ENCODE measurements at regions of chr20 and their contacts with region 1.

Region 1: DNA sequence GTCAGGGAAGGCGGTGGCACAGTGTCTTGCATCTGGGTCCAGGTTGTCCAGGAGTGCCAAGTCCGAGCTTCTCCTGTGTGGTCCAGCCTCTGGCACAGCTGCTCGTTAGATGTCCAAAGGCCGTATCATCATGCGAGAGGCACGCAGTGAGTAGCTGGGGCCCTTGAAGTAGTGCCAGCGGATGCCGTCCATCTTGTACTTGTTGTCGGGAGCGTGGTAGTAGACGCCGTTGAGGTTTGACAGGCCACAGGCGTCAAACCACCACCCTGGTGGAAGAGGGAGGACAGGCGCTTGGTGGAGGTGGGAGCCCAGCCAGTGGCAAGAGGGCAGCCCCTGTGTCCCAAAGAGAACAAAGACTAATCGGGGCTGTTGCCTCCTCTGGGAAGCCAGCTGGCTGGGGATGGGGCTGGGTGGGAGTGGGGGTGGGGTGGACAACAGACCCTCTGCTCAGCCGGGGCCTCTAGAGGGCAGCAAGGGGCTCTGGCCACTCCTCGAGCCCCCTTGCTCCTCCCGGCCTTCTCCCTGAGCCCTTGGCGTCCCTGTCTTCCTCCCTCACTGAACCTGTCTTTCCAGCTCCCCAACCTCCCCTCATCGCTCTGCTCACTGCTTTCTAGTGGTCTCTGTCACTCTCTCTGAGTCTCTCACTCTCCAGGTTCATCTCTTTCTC is 39.5 kb downstream of the FAM110A start:
- DNase-seq: no peak
- ATAC-seq: peak in 1 of 8 donors; percentile 4
- H3K4me3 ChIP-seq: no peak overlapping the region
- H3K27ac ChIP-seq: no peak overlapping the region
- H3K4me1 ChIP-seq: no peaks in the 10 kb centered on the region
- H3K27me3 ChIP-seq: peaks cover 0 to 15% (median 6%) of the 10 kb centered on the region in 7 donors
- CTCF ChIP-seq: no peak

Region 2: DNA sequence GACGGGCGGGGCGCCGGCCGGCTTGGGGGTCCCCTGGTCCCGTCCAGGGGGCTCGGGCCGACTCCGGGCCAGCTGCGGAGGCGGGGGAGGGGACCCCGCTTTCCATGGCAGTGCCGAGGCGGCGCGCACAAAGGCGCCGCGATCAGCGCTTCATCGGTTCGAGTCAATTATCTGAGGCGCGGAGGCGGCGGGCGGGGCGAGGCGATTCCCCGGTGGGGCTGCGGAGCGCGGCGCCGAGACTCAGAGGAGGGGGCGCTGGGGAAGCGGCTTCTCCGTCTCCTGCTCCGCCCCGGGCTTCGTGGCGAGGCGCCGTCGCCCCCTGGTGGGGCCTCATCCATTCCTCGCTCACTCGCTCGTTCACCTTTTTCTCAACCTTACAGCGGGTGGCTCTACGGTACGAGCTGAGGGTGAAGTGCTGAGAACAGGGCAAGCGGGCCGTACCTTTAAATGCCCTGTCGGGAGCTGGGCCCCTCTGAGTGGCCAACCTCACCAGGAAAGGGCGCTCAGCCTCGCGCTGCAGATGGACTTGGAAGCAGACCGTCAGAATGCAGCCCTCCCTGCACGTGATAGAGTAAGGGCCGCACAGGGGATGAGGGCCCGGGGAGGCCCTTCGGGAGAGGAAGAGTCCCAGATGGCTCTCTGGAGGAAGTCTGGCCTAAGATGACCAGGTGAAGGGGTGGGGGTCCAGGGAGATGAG is 144.6 kb before region 1 on chr20:
- intact Hi-C with region 1: no loop called
- DNase-seq: peak; percentile 50 to 66
- ATAC-seq: peak; percentile 75 to 88 (median 84)
- H3K4me3 ChIP-seq: peak overlapping the region; percentile 38 to 70 (median 58)
- H3K27ac ChIP-seq: peak overlapping the region in 1 of 10 donors; percentile 36
- H3K4me1 ChIP-seq: peaks cover 0 to 16% (median 8%) of the 10 kb centered on the region in 9 donors
- H3K27me3 ChIP-seq: peaks cover 0 to 63% (median 35%) of the 10 kb centered on the region in 7 donors
- CTCF ChIP-seq: peak; percentile 43 to 78 (median 71)

Region 3: GRCh38 chr20:740141-740540 is 132.8 kb before region 1 on chr20:
- intact Hi-C with region 1: no loop called
- DNase-seq: no peak
- ATAC-seq: no peak
- H3K4me3 ChIP-seq: no peak overlapping the region
- H3K27ac ChIP-seq: no peak overlapping the region
- H3K4me1 ChIP-seq: peaks cover 0 to 3% (median 0%) of the 10 kb centered on the region in 9 donors
- H3K27me3 ChIP-seq: peaks cover 0 to 7% (median 0%) of the 10 kb centered on the region in 7 donors
- CTCF ChIP-seq: no peak

Region 4: GRCh38 chr20:768426-768978 is 104.5 kb before region 1 on chr20 and contains the start of gene SLC52A3:
- intact Hi-C with region 1: no loop called
- DNase-seq: peak; percentile 30 to 76
- ATAC-seq: peak; percentile 75 to 93 (median 91)
- H3K4me3 ChIP-seq: peak within 1 kb of the TSS in 9 of 10 donors; percentile 16 to 54 (median 44)
- H3K27ac ChIP-seq: peak within 1 kb of the TSS; percentile 27 to 88 (median 69)
- H3K4me1 ChIP-seq: peaks cover 0 to 17% (median 7%) of the 10 kb centered on the region in 9 donors
- H3K27me3 ChIP-seq: peaks cover 0 to 8% (median 0%) of the 10 kb centered on the region in 7 donors
- CTCF ChIP-seq: peak in 8 of 9 donors; percentile 13 to 62 (median 42)
- total RNA-seq, gene SLC52A3: 1.5 to 5.7 (median 2.6) TPM

Region 5: GRCh38 chr20:916125-916799 is 43.3 kb after region 1 on chr20 and contains the start of gene ANGPT4:
- intact Hi-C with region 1: no loop called
- DNase-seq: no peak
- ATAC-seq: peak in 6 of 8 donors; percentile 50 to 75 (median 70)
- H3K4me3 ChIP-seq: no peak within 1 kb of the TSS
- H3K27ac ChIP-seq: no peak within 1 kb of the TSS
- H3K4me1 ChIP-seq: peaks cover 0 to 20% (median 6%) of the 10 kb centered on the region in 9 donors
- H3K27me3 ChIP-seq: peaks cover 0 to 19% (median 4%) of the 10 kb centered on the region in 7 donors
- CTCF ChIP-seq: no peak
- total RNA-seq, gene ANGPT4: 0.05 to 0.44 TPM in 2 of 10 donors, not detected in the others

Region 6: DNA sequence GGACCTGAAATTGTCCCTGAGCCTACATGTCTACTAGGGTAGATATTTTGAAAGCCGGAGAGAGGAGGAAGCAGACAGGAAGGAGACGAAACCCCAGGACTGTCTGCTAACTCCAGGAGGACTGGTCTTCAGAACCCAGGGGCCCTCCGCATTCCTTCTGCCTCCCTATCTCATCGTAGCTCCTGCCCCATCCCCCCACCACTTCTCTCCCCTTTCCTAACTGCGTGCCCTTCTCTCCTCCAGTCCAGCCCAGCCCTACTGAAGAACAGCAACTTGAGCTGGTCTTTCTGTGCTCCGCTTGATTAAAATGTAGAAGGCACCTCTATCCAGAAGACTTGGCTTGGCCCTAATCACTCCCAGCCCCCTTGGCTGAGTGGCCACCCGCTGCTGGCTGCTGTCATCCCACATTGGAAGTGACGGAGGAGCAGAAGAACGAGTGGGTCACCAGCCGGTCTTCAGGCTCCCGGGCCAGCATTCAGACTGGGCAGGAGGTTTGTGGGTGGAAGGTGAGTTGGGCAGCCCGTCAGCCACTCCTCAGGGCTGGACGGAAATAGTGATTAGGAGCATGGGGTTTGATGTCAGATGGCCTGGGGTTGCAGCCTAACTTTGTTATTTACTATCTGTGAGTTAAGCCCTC is 71.9 kb after region 1 on chr20:
- intact Hi-C with region 1: loop called in 1 of 10 experiments (anchors 5 kb)
- DNase-seq: no peak
- ATAC-seq: no peak
- H3K4me3 ChIP-seq: no peak overlapping the region
- H3K27ac ChIP-seq: no peak overlapping the region
- H3K4me1 ChIP-seq: no peaks in the 10 kb centered on the region
- H3K27me3 ChIP-seq: peaks cover 0 to 62% (median 21%) of the 10 kb centered on the region in 7 donors
- CTCF ChIP-seq: no peak

Region 7: DNA sequence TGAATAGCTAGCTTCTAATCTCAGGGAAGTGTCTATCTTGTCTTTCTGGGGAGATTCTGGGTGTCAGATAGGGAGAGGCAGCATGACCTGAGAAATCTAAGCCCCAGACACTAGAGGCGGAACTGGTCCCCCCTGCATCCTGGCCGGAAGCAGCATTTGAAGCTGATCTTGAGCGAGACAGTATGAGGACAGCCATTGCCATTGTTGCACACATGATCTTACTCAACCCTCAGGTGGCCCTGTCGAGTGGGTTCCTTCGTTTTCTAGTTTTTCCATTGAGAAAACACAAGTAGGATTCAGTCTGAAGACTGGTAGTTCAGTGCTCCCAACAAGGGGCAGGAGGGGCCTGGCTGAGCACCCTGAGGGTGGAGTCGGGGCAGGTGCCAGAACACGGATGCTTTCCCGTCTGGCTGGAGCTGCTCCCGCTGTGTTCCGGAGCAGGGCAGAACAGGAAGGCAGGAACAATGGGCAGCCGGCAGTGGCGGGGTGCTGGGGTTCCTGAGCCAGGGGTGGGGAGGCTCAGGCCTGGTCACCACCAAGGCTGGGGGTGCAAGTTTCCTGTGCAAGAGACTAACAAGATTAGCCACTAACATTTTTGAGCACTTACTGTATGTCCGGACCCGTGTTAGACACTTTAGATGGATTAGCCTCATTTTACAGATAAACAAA is 463.8 kb after region 1 on chr20:
- intact Hi-C with region 1: loop called in 1 of 10 experiments (anchors 5 kb)
- DNase-seq: peak; percentile 86 to 90
- ATAC-seq: peak; percentile 87 to 97 (median 94)
- H3K4me3 ChIP-seq: peak overlapping the region in 2 of 10 donors; percentile 2 to 8
- H3K27ac ChIP-seq: peak overlapping the region; percentile 54 to 89 (median 78)
- H3K4me1 ChIP-seq: peaks cover 12 to 56% (median 44%) of the 10 kb centered on the region in 9 donors
- H3K27me3 ChIP-seq: no peaks in the 10 kb centered on the region
- CTCF ChIP-seq: no peak